ENCODE measurements at regions of chr9 and their contacts with region 1.

Region 1: DNA sequence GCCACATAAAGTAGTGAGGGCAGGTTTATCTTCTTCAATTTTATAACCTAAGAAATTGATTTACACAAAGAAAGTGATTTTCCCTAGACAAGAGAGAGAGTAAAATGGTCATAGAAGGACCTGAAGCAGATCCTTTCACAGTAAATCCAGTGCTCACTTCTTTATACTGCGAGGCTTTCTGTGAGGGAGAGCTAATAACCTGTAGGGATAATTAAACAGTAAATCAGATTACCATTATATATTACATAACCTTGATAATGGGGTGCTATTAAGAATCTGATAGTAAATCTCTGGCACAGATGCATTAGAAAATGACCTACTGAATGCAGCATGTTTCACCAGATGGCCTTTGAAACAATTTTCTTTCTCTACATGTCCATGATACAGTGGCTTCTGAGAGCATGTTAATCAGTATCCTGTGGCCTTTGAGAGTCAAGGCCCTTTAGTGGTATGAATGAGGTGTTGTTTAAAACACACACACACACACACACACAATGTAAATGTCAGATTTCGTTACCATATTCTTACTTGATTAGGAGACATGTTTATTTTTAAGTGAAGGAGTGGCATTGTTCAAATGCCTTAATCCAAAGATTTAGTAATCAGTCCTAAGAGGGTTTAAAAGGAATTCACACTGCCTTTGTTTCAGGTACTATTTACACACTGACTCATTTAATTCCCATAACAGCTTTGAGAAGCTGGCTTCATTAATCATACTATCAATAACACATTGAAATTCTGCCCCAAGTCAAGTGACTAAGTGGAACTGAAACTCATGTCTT is 124.7 kb downstream of the ALDH1A1 start:
- DNase-seq: no peak
- ATAC-seq: no peak
- H3K4me3 Mint-ChIP-seq: no peak overlapping the region
- H3K27ac Mint-ChIP-seq: no peak overlapping the region
- H3K4me1 Mint-ChIP-seq: no peaks in the 10 kb centered on the region
- H3K27me3 Mint-ChIP-seq: peaks cover 2% of the 10 kb centered on the region
- CTCF ChIP-seq: no peak

Region 2: DNA sequence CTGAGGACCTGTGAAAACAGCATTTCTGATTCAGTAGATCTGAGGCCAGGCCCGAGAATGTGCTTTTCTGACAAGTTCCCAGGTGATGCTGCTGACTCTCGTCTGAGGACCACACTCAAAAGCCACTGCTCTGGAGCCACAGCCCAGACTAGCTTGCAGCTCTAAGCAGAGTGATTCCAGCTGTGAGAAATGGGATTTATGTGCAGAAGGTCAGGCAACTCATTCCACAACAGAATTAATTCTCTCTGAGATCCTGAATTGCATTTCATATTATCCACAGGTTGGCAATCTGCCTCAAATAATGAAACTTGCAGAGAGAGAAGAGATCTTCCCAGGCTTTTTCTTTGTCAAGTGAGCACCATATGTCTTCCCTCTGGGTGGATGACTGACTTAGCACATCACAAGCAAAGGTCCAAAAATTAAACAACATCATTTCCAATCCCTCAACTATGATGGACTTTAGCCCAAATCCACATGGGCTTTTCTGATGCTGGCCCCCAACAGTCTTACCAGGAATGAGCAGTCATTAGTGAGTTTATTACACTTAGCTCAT is 15.5 kb before region 1 on chr9:
- CTCF ChIA-PET with region 1: interaction called, 10 read pairs
- POLR2A ChIA-PET with region 1: no interaction called
- intact Hi-C with region 1: no loop called
- DNase-seq: no peak
- ATAC-seq: no peak
- H3K4me3 Mint-ChIP-seq: no peak overlapping the region
- H3K27ac Mint-ChIP-seq: no peak overlapping the region
- H3K4me1 Mint-ChIP-seq: no peaks in the 10 kb centered on the region
- H3K27me3 Mint-ChIP-seq: peaks cover 2% of the 10 kb centered on the region
- CTCF ChIP-seq: no peak